ENCODE measurements at regions of chr6 and their contacts with region 1.

Region 1: GRCh38 chr6:3133515-3133914 is 15.0 kb downstream of the BPHL start:
- DNase-seq: no peak
- H3K4me3 ChIP-seq: no peak overlapping the region
- H3K27ac ChIP-seq: no peak overlapping the region
- H3K4me1 ChIP-seq: peaks cover 4% of the 10 kb centered on the region
- H3K27me3 ChIP-seq: no peaks in the 10 kb centered on the region
- CTCF ChIP-seq: no peak

Region 2: GRCh38 chr6:3270258-3270657 is 136.7 kb after region 1 on chr6:
- CTCF ChIA-PET with region 1: no interaction called
- dilution Hi-C with region 1: loop called (anchors 5 kb)
- in situ Hi-C with region 1: no loop called
- intact Hi-C with region 1: no loop called
- DNase-seq: no peak
- H3K4me3 ChIP-seq: no peak overlapping the region
- H3K27ac ChIP-seq: no peak overlapping the region
- H3K4me1 ChIP-seq: no peaks in the 10 kb centered on the region
- H3K27me3 ChIP-seq: no peaks in the 10 kb centered on the region
- CTCF ChIP-seq: no peak